ENCODE measurements at regions of chr5 and their contacts with region 1.

Region 1: GRCh38 chr5:134041570-134042411 is 37.0 kb upstream of the VDAC1 start:
- H3K4me3 ChIP-seq: no peak overlapping the region
- H3K27ac ChIP-seq: no peak overlapping the region
- H3K4me1 ChIP-seq: no peaks in the 10 kb centered on the region
- CTCF ChIP-seq: no peak

Region 2: GRCh38 chr5:134026521-134027268 is 15.1 kb before region 1 on chr5:
- CTCF ChIA-PET with region 1: interaction called, 53 read pairs
- POLR2A ChIA-PET with region 1: no interaction called
- H3K4me3 ChIP-seq: no peak overlapping the region
- H3K27ac ChIP-seq: no peak overlapping the region
- H3K4me1 ChIP-seq: no peaks in the 10 kb centered on the region
- CTCF ChIP-seq: peak; percentile 76

Region 3: GRCh38 chr5:134063188-134063820 is 21.5 kb after region 1 on chr5:
- CTCF ChIA-PET with region 1: interaction called, 21 read pairs
- POLR2A ChIA-PET with region 1: no interaction called
- H3K4me3 ChIP-seq: no peak overlapping the region
- H3K27ac ChIP-seq: no peak overlapping the region
- H3K4me1 ChIP-seq: no peaks in the 10 kb centered on the region
- CTCF ChIP-seq: no peak

Region 4: GRCh38 chr5:134083517-134083916 is 41.7 kb after region 1 on chr5:
- CTCF ChIA-PET with region 1: interaction called, 10 read pairs
- POLR2A ChIA-PET with region 1: no interaction called
- H3K4me3 ChIP-seq: no peak overlapping the region
- H3K27ac ChIP-seq: no peak overlapping the region
- H3K4me1 ChIP-seq: no peaks in the 10 kb centered on the region
- CTCF ChIP-seq: no peak

Region 5: GRCh38 chr5:134113902-134114875 is 72.4 kb after region 1 on chr5 and contains the start of gene TCF7:
- CTCF ChIA-PET with region 1: interaction called, 42 read pairs
- POLR2A ChIA-PET with region 1: no interaction called
- H3K4me3 ChIP-seq: peak within 1 kb of the TSS; percentile 60
- H3K27ac ChIP-seq: peak within 1 kb of the TSS; percentile 56; the same call in 1 of the 2 replicates
- H3K4me1 ChIP-seq: no peaks in the 10 kb centered on the region
- CTCF ChIP-seq: no peak

Region 6: DNA sequence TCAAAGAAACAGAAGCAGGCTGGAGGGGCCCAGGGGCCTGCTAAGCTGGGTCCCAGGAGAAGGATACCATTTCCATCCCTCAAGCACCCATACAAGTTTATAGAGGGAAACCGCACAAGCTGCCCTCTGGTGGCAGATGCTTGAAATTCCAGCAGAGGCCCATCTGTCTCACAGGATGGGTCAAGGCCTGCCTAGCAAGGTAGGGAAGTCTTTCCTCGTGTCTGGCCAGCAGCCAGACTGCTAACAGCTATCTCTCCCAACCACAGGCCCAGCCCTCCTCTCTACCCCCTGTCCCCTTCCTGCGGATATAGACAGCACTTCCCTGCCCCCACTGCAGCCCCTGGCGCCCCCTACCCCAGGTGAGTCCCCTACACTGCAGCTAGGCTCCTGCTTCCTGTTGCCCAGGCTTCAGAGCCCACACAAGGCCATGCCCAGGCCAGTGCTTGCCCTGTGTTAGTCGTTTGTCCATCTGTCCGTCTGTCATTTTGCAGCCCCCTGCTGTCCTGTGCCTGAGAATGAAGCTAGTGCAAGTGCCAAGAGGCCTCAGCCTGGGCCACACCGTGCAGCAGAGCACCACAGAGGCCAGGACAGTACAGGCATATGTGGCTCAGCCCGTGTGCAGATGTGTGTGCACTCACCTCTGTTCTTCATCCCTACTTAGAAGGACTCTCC is 98.9 kb after region 1 on chr5:
- CTCF ChIA-PET with region 1: interaction called, 196 read pairs
- POLR2A ChIA-PET with region 1: no interaction called
- H3K4me3 ChIP-seq: no peak overlapping the region
- H3K27ac ChIP-seq: no peak overlapping the region
- H3K4me1 ChIP-seq: no peaks in the 10 kb centered on the region
- CTCF ChIP-seq: peak; percentile 90

Region 7: DNA sequence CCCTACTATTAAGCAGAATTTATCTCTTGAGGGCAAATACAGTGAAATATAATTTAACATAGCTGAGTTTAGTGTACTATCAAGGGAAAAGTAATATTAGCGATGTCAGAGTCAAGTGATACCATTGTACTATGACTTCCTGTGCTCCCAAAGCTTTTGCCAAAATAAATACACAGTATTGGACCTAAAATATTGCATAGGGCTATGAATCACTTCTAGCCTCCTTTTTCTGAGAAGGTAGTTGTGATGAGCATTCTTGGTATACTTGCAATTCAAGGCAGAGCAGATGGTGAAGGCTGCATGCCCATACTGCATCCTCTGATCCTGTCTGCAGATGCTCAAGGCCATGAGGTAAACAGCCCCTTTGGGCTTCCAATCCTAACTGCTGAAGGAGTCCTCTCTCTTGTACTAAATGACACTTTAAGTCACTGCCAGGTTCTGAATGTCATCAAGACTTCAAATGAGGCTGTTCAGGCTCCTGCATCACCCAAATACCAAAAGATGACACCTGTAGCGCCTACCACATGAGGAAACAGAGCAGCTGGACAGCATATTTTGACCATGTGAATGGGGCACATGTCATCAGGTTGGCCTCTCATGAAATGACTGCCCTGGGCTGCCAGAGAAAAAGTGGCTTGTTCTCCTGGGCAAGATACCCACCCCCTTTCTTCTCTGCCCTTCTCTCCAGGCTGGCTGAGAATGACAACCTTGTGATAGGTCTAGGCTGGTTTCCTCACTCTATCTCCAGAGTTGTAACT is 213.8 kb after region 1 on chr5:
- CTCF ChIA-PET with region 1: no interaction called
- POLR2A ChIA-PET with region 1: no interaction called
- H3K4me3 ChIP-seq: no peak overlapping the region
- H3K27ac ChIP-seq: no peak overlapping the region
- H3K4me1 ChIP-seq: no peaks in the 10 kb centered on the region
- CTCF ChIP-seq: no peak

Region 8: DNA sequence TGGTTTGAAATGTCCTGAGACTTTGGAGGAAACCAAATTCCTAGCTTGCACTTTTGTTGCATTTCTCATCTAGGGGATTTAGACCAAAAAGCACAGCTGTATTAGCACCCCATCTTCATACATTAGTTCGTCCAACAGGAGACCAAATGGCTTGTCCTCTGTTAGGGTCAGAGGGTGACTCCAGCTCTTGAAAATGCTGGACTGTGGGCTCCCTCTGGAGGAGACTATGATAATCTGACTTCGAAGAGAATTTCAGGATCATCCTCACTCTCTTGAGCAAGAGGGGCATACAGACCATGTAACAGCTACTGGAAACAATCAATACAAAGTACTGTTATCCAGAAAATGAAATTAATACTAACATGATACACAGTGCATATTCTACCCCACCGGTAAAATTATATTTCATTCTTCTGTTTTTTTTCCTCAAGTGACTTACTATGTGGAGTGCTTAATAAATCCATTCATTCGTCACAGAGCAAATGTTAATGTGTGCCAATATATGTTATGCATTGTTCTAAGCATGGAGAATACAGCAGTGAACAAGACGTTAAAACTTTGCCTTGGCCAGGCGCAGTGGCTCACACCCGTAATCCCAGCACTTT is 247.8 kb after region 1 on chr5:
- CTCF ChIA-PET with region 1: interaction called, 14 read pairs
- POLR2A ChIA-PET with region 1: no interaction called
- H3K4me3 ChIP-seq: no peak overlapping the region
- H3K27ac ChIP-seq: no peak overlapping the region
- H3K4me1 ChIP-seq: no peaks in the 10 kb centered on the region
- CTCF ChIP-seq: peak; percentile 83

Region 9: GRCh38 chr5:134541736-134542376 is 500.1 kb after region 1 on chr5:
- CTCF ChIA-PET with region 1: no interaction called
- POLR2A ChIA-PET with region 1: no interaction called
- H3K4me3 ChIP-seq: no peak overlapping the region
- H3K27ac ChIP-seq: no peak overlapping the region
- H3K4me1 ChIP-seq: no peaks in the 10 kb centered on the region
- CTCF ChIP-seq: no peak